ENCODE measurements at regions of chr6 and their contacts with region 1.

Region 1: DNA sequence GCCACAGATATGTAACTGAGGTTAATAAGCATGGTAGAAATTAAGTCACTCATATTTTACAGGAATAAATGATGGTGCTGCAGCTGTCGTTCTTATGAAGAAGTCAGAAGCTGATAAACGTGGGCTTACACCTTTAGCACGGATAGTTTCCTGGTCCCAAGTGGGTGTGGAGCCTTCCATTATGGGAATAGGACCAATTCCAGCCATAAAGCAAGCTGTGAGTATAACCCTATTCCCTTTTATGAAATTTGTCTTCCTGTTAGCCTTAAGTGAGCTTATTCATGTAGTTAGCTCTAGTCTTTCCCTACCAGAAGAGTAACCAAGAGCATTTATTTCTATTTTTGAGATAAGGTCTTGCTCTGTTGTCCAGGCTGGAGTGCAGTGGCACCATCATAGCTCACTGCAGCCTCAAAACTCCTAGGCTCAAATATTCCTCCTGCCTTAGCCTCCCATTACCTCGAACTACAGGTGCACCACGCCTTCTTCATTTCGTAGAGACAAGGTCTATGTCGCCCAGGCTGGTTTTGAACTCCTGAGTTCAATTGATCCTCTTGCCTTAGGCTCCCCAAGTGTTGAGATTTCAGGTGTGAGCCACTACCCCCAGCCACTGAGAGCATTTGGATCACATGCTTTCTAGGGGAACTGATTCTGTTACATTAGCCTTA is 12.0 kb downstream of the TCP1 start:
- H3K4me3 Mint-ChIP-seq: no peak overlapping the region
- H3K27ac Mint-ChIP-seq: no peak overlapping the region
- H3K4me1 Mint-ChIP-seq: peaks cover 8% of the 10 kb centered on the region
- H3K27me3 Mint-ChIP-seq: no peaks in the 10 kb centered on the region

Region 2: DNA sequence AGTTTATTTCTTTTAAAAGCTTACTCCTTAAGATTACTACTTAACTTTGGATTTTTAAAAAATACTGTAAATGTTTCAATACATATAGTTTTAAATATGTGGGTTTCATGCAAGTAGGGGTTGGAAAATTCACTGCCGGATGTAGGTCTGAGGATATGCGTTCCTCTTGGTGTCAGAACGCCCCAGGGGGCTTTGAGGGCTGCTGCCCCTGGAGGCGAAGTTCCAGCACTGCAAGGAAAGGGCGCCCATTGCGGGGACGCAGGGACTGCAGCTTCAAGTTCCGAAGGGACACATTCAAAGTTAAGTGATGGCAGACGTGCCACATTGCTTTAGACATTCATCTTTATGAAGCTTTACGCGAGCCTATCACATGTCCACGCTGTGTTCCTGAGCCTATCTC is 237.2 kb before region 1 on chr6:
- intact Hi-C with region 1: no loop called
- H3K4me3 Mint-ChIP-seq: no peak overlapping the region
- H3K27ac Mint-ChIP-seq: no peak overlapping the region
- H3K4me1 Mint-ChIP-seq: no peaks in the 10 kb centered on the region
- H3K27me3 Mint-ChIP-seq: peaks cover 1% of the 10 kb centered on the region

Region 3: DNA sequence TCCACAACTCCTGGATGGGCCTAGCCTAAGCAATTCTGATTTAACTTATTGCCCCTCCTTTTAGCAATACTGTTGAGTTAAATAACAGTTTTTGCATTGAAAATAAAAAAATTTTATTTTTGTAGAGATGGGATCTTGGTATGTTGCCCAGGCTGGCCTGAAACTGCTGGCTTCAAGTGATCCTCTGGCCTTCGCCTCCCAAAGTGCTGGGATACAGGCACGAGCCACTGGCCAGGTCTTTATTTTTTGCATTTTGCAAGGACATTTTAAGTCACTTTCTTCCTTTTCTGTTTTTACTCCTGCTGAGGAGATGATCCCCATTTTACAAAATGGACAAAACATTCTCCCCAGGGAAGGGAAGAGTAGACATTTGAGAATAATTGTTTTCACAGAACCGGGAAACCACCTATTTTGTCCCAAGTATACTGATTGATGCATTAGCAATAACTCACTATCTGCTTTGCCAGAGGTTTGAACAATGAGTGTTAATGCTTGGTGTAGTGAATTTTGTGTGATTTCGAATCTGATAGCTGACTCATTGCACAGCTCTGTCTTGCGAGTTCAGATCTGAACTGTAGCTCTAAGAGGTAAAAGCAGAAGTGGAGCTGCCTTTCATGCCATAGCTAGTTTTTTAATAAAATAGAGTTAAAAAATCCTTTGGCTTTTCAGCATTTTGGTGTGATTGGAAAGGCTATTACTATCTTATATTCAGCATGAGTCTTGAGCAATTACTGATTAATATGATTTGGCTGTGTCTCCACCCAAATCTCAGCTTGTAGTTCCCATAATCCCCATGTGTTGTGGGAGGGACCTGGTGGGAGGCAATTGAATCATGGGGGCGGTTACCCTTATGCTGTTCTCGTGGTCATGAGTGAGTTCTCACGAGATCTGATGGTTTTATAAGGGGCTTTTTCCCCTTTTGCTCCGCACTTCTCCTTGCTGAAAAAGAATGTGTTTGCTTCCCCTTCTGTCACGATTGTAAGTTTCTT is 212.4 kb after region 1 on chr6:
- intact Hi-C with region 1: no loop called
- H3K4me3 Mint-ChIP-seq: no peak overlapping the region
- H3K27ac Mint-ChIP-seq: peak overlapping the region; percentile 67
- H3K4me1 Mint-ChIP-seq: peaks cover 72% of the 10 kb centered on the region
- H3K27me3 Mint-ChIP-seq: no peaks in the 10 kb centered on the region

Region 4: DNA sequence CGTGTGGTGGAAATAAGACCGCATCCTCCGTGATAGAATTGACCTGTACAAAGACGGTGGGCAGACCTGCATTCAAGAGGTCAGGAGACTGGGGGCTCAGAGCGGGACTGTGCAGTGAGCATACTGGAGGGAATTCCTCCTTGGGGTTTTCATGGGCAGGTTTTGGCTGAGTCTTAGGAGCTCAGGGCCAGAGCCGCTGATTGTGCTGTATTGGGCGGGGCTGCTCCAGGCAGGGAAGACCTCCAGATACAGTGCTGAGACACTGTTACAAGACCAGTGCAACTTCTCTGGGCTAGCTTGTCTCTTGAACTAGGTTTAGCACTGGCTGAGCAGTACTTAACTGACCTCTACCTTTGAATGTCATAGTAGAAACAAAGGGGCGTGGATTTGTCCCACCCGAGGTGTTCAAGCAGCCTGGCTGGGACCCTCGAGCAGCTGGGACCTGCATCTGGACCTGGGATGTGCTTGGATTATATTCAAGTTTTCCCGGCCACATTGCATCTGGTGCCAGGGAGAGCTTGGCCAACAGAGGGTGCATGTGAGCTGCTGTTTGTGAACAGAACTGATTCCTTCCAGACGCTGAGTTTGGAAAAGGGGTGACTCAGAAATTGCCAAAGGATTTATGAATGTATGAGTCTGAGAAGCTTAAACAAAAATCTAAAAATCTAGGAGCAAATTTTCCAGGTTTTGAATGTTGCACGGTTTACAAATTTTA is 310.9 kb after region 1 on chr6:
- intact Hi-C with region 1: loop called (anchors 10 kb)
- H3K4me3 Mint-ChIP-seq: no peak overlapping the region
- H3K27ac Mint-ChIP-seq: no peak overlapping the region
- H3K4me1 Mint-ChIP-seq: peaks cover 5% of the 10 kb centered on the region
- H3K27me3 Mint-ChIP-seq: no peaks in the 10 kb centered on the region